Activated CD8-positive, alpha-beta T cell treated with anti-CD3 and anti-CD28 coated beads, Interleukin-2, amount 10 ng/mL, durations not matched to agents 7 days and 5 days (primary cell): ENCODE measurements at regions of chr17 and their contacts with region 1.

Region 1: GRCh38 chr17:10226930-10227685 is 28.7 kb upstream of the GAS7 start:
- DNase-seq: peak; percentile 67
- ATAC-seq: peak; percentile 60
- H3K4me3 Mint-ChIP-seq: no peak overlapping the region
- H3K27ac Mint-ChIP-seq: no peak overlapping the region
- H3K4me1 Mint-ChIP-seq: no peaks in the 10 kb centered on the region
- H3K27me3 Mint-ChIP-seq: peaks cover 2% of the 10 kb centered on the region

Region 2: DNA sequence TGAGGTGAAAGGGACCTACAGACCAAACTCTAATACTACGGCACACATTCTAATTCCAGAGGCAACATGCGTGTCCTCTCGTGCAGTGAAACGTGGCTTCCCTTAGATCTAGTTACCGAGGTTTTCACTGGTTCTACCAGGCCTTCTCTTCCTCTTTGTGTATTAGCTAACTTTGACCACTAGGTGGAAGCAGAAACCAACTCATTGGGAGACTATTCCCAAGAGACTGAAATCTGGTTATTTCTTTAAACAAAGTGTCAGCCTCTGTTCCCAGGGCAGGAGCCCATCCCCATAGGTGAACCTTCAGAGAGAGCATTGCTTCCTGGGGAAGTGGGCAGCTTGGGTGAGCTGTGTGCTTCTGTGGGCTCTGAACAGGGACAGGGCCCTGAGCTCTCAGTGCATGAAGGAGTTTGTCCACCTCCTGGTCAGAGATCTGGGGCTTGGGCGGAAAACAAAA is 302.3 kb before region 1 on chr17:
- CTCF ChIA-PET with region 1: interaction called, 16 read pairs
- POLR2A ChIA-PET with region 1: no interaction called
- DNase-seq: peak; percentile 26
- ATAC-seq: peak; percentile 77
- H3K4me3 Mint-ChIP-seq: no peak overlapping the region
- H3K27ac Mint-ChIP-seq: no peak overlapping the region
- H3K4me1 Mint-ChIP-seq: no peaks in the 10 kb centered on the region
- H3K27me3 Mint-ChIP-seq: no peaks in the 10 kb centered on the region

Region 3: GRCh38 chr17:9971991-9972599 is 255.0 kb before region 1 on chr17:
- CTCF ChIA-PET with region 1: interaction called, 15 read pairs
- POLR2A ChIA-PET with region 1: no interaction called
- DNase-seq: no peak
- ATAC-seq: no peak
- H3K4me3 Mint-ChIP-seq: no peak overlapping the region
- H3K27ac Mint-ChIP-seq: no peak overlapping the region
- H3K4me1 Mint-ChIP-seq: no peaks in the 10 kb centered on the region
- H3K27me3 Mint-ChIP-seq: no peaks in the 10 kb centered on the region

Region 4: DNA sequence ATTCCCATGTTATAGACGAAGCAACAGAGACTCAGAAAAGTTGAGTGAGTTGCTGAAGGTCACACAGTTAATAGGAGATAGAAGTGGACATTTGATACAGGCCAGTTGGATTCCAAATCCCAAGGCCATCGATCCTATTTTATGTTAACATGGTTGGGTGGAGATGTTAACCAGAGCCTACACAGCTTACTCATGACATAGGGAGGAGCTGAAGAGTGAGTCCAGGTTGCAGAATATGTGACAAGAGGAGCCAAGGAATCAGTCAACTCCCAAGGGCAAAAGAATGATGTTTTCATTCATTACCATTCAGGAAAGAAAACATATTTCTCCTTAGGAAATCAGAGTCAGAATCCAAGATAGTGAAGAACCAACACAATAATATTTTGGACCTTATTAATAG is 11.6 kb after region 1 on chr17:
- CTCF ChIA-PET with region 1: interaction called, 14 read pairs
- POLR2A ChIA-PET with region 1: no interaction called
- DNase-seq: no peak
- ATAC-seq: no peak
- H3K4me3 Mint-ChIP-seq: no peak overlapping the region
- H3K27ac Mint-ChIP-seq: no peak overlapping the region
- H3K4me1 Mint-ChIP-seq: no peaks in the 10 kb centered on the region
- H3K27me3 Mint-ChIP-seq: peaks cover 3% of the 10 kb centered on the region

Region 5: DNA sequence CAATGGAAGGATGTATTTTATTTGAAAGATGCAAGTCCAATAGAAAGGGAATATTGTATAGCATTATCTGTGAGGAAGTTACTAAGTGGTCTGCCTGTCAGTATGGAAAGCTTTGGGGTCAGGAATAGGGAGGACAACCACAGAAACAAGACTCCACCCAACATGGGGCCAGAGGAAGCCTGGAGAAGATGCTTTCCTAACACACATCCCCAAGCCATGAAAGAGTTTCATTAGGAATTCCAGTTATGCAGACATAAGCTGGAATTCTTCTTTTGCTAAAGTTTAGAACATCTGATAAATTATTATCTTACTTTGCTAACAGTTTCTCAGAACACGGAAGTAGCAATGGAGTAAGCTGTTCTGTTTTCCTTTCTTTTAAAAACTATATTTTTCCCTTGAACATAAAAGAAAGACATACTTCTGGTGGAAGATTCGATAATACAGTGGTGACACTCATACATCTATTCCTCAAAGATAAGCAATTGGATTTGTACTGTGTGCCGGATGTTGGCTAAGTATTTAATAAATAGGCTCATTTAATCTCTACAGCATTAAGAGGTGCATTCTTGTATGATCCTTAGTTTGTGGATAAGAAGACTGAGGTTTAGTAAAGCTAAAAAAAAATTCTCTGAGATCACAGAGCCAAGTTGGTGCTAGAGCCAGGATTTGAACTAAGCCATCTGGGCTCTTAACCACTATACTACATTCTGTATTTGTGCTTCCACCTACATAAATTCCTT is 22.3 kb after region 1 on chr17:
- CTCF ChIA-PET with region 1: no interaction called
- POLR2A ChIA-PET with region 1: no interaction called
- DNase-seq: no peak
- ATAC-seq: no peak
- H3K4me3 Mint-ChIP-seq: no peak overlapping the region
- H3K27ac Mint-ChIP-seq: no peak overlapping the region
- H3K4me1 Mint-ChIP-seq: no peaks in the 10 kb centered on the region
- H3K27me3 Mint-ChIP-seq: peaks cover 3% of the 10 kb centered on the region